Prostate gland (tissue), 2 donors: ENCODE measurements at regions of chr1 and their contacts with region 1.

Region 1: GRCh38 chr1:65209005-65209885 is 61.2 kb downstream of the AK4 start:
- DNase-seq: peak; percentile 51
- H3K4me3 ChIP-seq: no peak overlapping the region
- H3K27ac ChIP-seq: no peak overlapping the region
- H3K4me1 ChIP-seq: no peaks in the 10 kb centered on the region
- H3K27me3 ChIP-seq: no peaks in the 10 kb centered on the region
- CTCF ChIP-seq: peak; percentile 29 to 70 (median 62)
- POLR2A ChIP-seq: no peak

Region 2: DNA sequence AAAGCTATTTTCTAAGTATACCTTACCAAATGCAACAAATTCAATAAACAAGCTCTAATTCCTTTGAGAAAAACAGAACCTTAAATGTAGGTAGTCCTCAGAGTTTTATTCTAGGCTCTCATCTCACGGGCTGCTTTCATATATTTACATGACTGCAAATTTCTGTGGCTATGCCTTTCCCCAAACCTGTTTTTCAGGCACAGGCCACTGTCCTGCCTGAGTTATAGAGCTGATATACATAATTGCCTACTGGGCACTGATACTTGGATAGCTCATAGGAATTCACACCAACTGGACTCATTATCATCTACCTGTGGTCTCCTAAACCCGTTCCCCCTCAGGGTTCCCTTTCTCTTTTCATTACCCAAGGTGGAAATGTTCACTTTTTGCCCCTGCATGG is 485.5 kb before region 1 on chr1:
- intact Hi-C with region 1: no loop called
- DNase-seq: no peak
- H3K4me3 ChIP-seq: no peak overlapping the region
- H3K27ac ChIP-seq: no peak overlapping the region
- H3K4me1 ChIP-seq: no peaks in the 10 kb centered on the region
- H3K27me3 ChIP-seq: no peaks in the 10 kb centered on the region
- CTCF ChIP-seq: no peak
- POLR2A ChIP-seq: no peak

Region 3: DNA sequence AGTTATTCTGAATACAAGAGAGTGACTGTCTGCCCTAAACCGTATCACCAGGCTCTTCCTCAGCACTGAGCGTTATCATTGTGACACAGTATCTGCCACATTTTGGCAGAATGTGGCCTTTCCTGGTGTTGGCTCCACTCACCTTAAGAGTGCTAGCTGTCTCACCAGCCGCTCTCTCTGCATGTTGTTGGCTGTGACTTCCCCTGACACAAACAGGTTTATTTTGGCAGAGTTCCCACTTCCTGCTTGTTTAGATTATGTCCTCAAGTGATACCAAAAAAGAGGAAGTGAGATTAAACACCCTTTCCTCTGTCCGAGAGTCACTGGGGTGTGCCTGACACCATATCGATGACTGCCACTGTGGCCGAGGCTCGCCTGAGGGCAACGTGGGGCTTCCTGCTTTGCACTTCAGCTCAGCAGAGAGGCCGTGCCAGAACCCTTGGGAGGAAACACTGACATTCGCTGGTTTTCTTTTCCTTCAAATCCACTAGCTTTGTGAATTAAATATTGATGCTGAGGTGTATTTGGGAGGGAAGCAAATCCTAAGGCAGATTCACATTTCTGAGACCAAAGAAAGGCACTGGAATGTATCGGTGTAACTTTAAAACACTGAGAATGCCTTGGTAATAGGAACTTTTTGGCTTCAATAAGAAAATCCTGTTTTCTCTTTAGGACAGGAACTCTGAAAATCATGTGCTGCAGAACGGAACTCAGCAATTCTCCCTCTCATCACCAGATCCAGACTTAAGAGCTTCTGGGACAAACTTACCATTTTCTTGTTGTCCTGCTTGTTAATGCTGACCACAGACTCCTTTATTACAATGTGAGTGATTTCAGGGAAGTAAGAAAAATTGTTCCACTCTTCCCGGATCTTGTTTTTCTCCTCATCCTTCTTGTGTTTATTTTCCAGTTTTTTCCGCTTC is 345.0 kb before region 1 on chr1:
- intact Hi-C with region 1: loop called (anchors 10 kb)
- DNase-seq: peak; percentile 16
- H3K4me3 ChIP-seq: no peak overlapping the region
- H3K27ac ChIP-seq: no peak overlapping the region
- H3K4me1 ChIP-seq: no peaks in the 10 kb centered on the region
- H3K27me3 ChIP-seq: no peaks in the 10 kb centered on the region
- CTCF ChIP-seq: no peak
- POLR2A ChIP-seq: no peak

Region 4: DNA sequence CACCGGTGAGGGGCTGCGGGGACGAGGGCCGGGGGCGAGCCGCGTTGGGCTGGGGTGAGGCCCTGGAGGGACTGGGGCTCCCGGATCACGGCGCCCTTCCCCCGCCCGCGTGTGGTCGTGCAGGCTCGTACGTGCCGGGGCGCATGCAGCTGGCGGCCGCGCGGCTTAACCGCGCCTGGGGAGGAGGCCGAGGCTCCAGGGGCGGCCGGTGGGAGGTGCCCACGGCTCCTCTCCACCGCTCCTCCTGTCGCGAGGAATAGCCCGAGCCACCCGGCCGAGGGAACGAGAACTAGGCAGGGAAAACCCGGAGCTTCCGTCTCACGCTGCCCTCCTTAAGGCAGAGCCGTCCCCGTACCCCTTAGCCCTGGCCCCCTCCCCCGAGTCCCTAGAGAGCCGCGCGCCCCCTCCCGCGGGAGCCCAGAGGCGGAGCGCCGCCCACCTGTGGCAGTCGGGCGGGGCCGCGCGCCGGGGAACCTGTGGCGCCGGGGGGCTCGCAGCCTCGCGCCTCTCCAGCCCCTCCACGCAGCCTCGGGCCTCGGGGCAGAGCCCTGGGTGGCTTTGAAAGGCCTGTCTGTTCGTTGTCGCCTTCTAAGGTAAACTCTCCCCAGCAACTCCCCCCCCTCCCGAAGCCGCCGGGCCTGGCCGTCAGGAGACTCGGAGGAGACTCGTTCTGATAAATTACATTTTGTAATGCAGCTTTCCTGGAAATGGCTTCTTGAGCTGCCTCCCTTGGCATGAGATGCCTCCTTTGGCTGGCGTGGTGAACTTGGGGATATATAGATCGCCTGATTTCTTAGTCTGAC is 60.5 kb before region 1 on chr1:
- intact Hi-C with region 1: loop called (anchors 2 kb)
- DNase-seq: peak; percentile 54
- H3K4me3 ChIP-seq: peak overlapping the region; percentile 66 to 75
- H3K27ac ChIP-seq: peak overlapping the region; percentile 91 to 92
- H3K4me1 ChIP-seq: no peaks in the 10 kb centered on the region
- H3K27me3 ChIP-seq: no peaks in the 10 kb centered on the region
- CTCF ChIP-seq: no peak
- POLR2A ChIP-seq: peak; percentile 27

Region 5: GRCh38 chr1:65265651-65266351 is 56.6 kb after region 1 on chr1:
- intact Hi-C with region 1: no loop called
- DNase-seq: peak; percentile 13
- H3K4me3 ChIP-seq: peak overlapping the region; percentile 38 to 40
- H3K27ac ChIP-seq: no peak overlapping the region
- H3K4me1 ChIP-seq: no peaks in the 10 kb centered on the region
- H3K27me3 ChIP-seq: no peaks in the 10 kb centered on the region
- CTCF ChIP-seq: no peak
- POLR2A ChIP-seq: no peak

Region 6: GRCh38 chr1:65687428-65688214 is 478.4 kb after region 1 on chr1:
- intact Hi-C with region 1: loop called (anchors 5 kb)
- DNase-seq: peak; percentile 77
- H3K4me3 ChIP-seq: no peak overlapping the region
- H3K27ac ChIP-seq: no peak overlapping the region
- H3K4me1 ChIP-seq: no peaks in the 10 kb centered on the region
- H3K27me3 ChIP-seq: no peaks in the 10 kb centered on the region
- CTCF ChIP-seq: peak; percentile 78 to 97 (median 94)
- POLR2A ChIP-seq: no peak